GM12878 (cell line): ENCODE measurements at regions of chr17 and their contacts with region 1.

Region 1: DNA sequence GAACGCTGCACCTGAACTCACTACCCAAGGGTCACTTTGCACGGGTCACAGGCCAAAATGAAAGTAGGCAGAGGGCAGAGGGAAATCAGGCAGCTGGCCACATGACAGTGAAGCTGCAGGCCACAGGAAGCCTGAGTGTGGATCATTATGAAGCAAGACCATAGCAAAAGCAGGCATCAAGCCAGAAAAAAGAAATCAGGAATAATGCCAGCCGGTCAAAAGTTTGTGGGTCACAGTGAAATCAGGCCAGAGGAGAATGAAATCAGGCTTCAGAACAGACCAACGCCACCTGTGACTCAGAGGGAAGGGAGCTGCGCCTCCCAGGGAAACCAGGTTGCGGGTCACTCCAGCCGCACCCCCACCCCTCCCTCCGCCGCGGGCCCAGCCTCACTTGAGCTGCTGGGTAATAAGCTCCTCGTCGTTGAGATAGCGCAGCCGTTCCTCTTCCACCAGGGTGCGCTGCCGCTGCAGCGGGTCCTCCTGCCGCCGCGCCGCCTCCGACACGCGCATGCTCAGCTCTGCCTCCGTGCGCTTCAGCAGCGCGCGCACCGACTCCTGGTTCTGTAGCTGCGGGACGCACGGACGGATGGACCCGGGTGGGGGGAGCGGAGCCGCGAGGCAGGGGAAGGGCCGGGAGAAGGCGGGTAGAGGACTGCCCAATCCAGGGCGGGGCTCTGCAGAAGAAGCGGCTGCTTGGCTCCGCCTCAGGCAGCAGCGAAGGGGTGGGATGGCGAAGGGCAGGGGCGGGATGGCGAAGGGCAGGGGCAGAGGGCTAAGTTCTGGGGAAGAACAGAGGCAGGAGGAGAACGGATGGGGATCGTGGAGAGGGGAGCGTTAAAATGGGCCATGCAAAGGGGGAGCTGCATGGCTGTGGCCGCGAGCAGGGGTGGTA is 47.7 kb downstream of the SRCIN1 start:
- DNase-seq: peak; percentile 50
- ATAC-seq: peak; percentile 90
- H3K4me3 ChIP-seq: peak overlapping the region; percentile 60; the same call in 1 of the 2 replicates
- H3K27ac ChIP-seq: no peak overlapping the region
- H3K4me1 ChIP-seq: peaks cover 20% of the 10 kb centered on the region
- H3K27me3 ChIP-seq: peaks cover 15% of the 10 kb centered on the region in 2 experiments
- CTCF ChIP-seq: peak; percentile 93 to 99 (median 96); a peak in 5 of 6 replicates
- EP300 ChIP-seq: no peak
- POLR2A ChIP-seq: no peak
- RAD21 ChIP-seq: peak; percentile 69

Region 2: GRCh38 chr17:38584350-38584925 is 26.4 kb after region 1 on chr17:
- CTCF ChIA-PET with region 1: interaction called, 176 read pairs
- POLR2A ChIA-PET with region 1: interaction called, 3 read pairs
- RAD21 ChIA-PET with region 1: interaction called, 130 read pairs
- SMC1A ChIA-PET with region 1: interaction called, 54 read pairs
- in situ Hi-C with region 1: no loop called
- intact Hi-C with region 1: loop called (anchors 1 kb)
- DNase-seq: no peak
- ATAC-seq: peak; percentile 93
- H3K4me3 ChIP-seq: no peak overlapping the region
- H3K27ac ChIP-seq: no peak overlapping the region
- H3K4me1 ChIP-seq: peaks cover 8% of the 10 kb centered on the region
- H3K27me3 ChIP-seq: peaks cover 0 to 4% of the 10 kb centered on the region in 2 experiments; a peak in 3 of 4 replicates
- CTCF ChIP-seq: peak; percentile 88 to 93 (median 91)
- EP300 ChIP-seq: no peak
- POLR2A ChIP-seq: no peak
- RAD21 ChIP-seq: peak; percentile 75

Region 3: GRCh38 chr17:38598536-38598935 is 40.5 kb after region 1 on chr17:
- CTCF ChIA-PET with region 1: interaction called, 27 read pairs
- POLR2A ChIA-PET with region 1: interaction called, 3 read pairs
- RAD21 ChIA-PET with region 1: interaction called, 6 read pairs
- SMC1A ChIA-PET with region 1: interaction called, 13 read pairs
- in situ Hi-C with region 1: no loop called
- intact Hi-C with region 1: no loop called
- DNase-seq: no peak
- ATAC-seq: peak; percentile 74
- H3K4me3 ChIP-seq: no peak overlapping the region
- H3K27ac ChIP-seq: no peak overlapping the region
- H3K4me1 ChIP-seq: peaks cover 12% of the 10 kb centered on the region
- H3K27me3 ChIP-seq: peaks cover 0 to 5% of the 10 kb centered on the region in 2 experiments; a peak in 1 of 4 replicates
- CTCF ChIP-seq: no peak
- EP300 ChIP-seq: no peak
- POLR2A ChIP-seq: no peak
- RAD21 ChIP-seq: no peak

Region 4: GRCh38 chr17:38656959-38657823 is 99.1 kb after region 1 on chr17:
- CTCF ChIA-PET with region 1: interaction called, 492 read pairs
- POLR2A ChIA-PET with region 1: interaction called, 15 read pairs
- RAD21 ChIA-PET with region 1: interaction called, 294 read pairs
- SMC1A ChIA-PET with region 1: interaction called, 227 read pairs
- in situ Hi-C with region 1: no loop called
- intact Hi-C with region 1: no loop called
- DNase-seq: no peak
- ATAC-seq: no peak
- H3K4me3 ChIP-seq: no peak overlapping the region
- H3K27ac ChIP-seq: no peak overlapping the region
- H3K4me1 ChIP-seq: peaks cover 55% of the 10 kb centered on the region
- H3K27me3 ChIP-seq: no peaks in the 10 kb centered on the region
- CTCF ChIP-seq: no peak
- EP300 ChIP-seq: no peak
- POLR2A ChIP-seq: peak; percentile 43; the same call in 1 of the 2 replicates
- RAD21 ChIP-seq: no peak

Region 5: DNA sequence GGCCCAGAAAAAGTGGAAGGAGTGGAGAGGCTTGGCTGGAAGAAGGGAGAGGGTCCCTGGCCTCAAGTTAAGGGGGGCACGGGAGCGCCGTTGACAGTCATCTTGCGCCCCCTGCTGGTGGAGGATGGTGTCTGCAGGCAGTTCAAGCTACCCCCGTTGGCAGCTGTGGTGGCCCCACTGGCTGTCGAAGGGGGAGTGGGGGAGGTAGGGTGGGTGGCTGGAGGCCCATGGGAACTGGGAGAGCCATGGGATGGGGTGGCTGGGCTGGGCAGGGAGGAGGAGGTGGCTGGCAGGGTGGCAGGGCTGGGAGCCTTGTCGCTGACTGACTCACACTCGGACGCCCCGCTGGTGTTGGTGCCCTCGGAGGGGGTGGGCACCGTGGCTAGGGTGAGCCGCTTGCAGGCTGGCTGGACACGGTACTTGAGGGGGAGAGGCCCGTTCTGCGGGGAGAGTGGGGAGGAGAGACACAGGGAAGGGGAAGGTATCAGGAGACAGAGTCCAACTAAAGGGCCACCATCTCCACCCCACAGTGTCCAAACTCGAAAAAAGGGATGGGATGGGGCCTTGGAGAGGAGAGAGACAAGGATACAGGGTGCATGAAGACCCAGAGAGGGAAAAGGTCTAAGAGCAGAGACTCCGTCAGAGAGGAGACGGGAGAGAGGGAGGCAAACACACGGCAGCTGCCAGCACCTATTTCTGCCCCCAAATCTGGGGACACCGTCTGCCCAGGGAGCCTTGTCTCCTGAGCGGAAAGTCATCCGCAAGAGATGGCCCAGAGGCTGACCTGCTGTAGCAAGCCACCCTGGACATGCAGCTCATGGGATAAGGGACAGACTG is 177.3 kb after region 1 on chr17:
- CTCF ChIA-PET with region 1: interaction called, 16 read pairs
- POLR2A ChIA-PET with region 1: no interaction called
- RAD21 ChIA-PET with region 1: interaction called, 10 read pairs
- SMC1A ChIA-PET with region 1: interaction called, 3 read pairs
- in situ Hi-C with region 1: no loop called
- intact Hi-C with region 1: no loop called
- DNase-seq: no peak
- ATAC-seq: peak; percentile 57
- H3K4me3 ChIP-seq: no peak overlapping the region
- H3K27ac ChIP-seq: no peak overlapping the region
- H3K4me1 ChIP-seq: peaks cover 20% of the 10 kb centered on the region
- H3K27me3 ChIP-seq: no peaks in the 10 kb centered on the region
- CTCF ChIP-seq: peak; percentile 92 to 96 (median 95); a peak in 5 of 6 replicates
- EP300 ChIP-seq: no peak
- POLR2A ChIP-seq: no peak
- RAD21 ChIP-seq: peak; percentile 75